ENCODE measurements at regions of chr21 and their contacts with region 1.

Region 1: DNA sequence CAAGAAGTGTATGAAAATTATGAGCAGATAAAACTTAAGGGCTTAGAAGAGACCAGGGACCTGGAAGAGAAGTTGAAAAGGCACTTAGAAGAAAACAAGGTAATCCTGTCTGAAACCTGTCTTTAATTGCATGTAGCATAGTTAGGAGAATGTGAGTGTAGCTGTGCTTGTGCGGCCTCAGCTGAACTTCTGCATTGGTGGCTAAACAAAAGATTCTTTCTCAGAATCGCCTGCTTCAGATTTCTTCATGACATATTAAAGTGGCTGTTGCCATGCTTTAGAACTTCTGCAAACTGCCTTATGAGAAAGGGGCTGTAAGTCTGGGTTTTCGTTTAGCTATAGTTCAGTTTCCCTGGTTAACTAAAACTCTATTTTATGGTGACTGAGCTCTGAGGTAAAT is 94.5 kb downstream of the VPS26C start:
- DNase-seq: no peak

Region 2: DNA sequence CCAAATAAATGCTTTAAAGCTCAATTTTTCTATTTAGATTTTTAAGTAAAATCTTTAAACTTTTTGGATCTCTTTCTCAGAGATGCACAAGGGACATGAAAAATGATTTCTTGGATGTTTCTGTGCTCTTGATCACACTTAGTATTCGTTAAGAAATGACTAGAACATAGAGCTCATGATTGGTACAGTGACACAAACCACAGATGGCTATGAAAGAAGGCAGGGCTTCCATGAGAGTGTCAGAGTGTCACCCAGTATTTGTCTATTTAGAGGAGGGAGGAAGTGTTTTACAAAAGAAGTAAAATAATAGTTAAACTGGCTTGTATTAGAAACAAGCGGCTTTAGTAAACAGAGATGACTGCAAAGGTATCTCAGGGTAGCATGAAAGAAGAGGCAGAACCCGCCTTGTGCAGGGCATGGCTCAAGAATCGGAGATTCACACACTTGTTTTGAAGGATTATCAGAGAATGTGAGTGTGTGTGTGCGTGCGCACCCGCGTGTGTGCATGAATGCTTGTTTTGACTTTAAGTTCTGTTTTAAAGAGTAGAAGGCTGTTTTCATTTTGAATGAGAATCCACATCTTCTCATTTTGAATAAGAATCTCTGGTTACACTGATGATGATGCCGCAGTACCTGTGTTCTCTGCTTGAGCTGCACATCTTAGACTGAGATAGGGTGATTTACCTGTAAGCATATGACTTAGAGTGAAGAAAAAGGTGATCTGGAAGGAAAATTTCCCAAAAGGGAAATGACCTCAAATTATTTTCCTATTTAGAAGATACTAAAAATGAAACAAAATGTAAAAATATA is 12.3 kb after region 1 on chr21:
- intact Hi-C with region 1: loop called in 1 of 2 experiments (anchors 1 kb)
- DNase-seq: no peak

Region 3: DNA sequence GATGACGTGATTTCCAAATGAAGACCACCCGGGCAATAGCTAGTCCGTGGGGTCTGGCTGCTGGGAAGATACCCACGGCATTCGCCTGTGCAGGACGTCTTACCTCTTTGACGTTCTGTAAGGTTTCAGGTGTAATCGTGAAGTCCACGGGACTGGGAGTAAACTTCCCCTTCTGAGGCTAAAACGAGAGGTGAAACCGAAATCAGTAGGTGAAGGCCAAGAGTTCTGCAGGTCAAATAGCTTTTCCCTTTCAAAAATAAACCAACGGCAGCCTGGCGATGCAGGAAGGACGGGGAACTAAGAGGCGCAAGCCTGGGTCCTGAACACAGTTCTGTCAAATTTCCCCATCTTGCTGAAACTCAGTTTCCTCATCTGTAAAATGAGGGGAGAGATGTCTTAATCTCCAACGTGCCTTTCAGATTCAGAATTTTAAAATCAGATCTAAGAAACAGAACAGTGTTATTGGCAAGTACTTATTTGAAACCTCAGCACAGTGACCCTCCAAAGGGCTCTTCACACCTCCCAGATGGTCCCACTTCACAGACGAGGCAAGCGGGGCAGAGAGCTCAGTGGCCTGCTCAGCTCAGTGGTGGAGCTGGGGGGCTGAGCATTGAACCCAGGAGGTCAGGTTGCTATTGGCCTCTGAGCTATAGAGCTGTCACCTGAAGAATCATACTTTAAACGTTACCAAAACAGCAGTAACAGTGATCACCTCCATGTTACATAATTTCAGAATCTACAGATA is 59.8 kb after region 1 on chr21:
- intact Hi-C with region 1: no loop called
- DNase-seq: no peak

Region 4: GRCh38 chr21:37670883-37671282 is 498.2 kb after region 1 on chr21:
- intact Hi-C with region 1: no loop called
- DNase-seq: no peak